ENCODE measurements at regions of chr9 and their contacts with region 1.

Region 1: DNA sequence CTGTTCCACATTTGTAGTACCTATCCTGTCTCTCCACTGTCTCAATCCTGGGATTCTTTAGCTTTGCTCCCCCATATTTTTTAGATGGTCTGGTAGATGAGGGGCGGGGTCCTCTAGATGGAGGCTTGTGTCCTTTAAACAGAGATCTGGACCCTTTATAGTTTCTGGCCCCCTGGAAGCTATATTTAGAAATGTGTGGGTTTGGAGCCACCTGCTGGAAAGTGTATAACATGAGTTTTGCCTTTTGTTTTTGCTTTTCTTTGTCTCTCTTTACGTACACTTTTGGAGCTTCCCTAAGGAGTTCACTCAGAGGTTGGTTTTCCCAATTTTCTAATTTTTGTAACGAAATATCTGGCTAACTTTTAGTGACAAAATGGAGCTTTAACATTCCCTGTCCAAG is 110.7 kb downstream of the CFAP95 start:
- DNase-seq: no peak
- H3K4me3 Mint-ChIP-seq: no peak overlapping the region
- H3K27ac Mint-ChIP-seq: no peak overlapping the region
- H3K4me1 Mint-ChIP-seq: no peaks in the 10 kb centered on the region
- H3K27me3 Mint-ChIP-seq: no peaks in the 10 kb centered on the region
- CTCF ChIP-seq: peak; percentile 42

Region 2: DNA sequence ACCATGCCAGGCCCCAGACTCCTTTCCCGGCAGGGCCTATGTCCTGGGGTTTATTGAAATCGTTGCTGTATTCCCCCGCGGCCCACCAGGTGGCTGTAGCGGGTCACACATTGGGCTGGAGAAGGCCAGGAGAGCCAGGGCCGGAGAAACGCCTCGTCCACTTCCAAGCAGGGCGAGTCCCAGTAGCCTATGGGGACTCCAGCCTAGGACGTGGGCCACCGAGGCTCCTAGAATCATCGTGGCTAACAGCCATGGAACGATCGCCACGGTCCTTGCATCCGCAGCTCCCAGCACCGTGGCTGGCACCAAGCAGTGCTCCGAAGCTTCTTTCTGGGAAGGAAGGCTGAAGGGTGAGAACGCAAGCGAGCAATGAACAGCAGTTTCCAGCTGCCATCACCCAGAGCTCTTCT is 518.6 kb before region 1 on chr9:
- CTCF ChIA-PET with region 1: no interaction called
- intact Hi-C with region 1: loop called (anchors 2 kb)
- DNase-seq: peak; percentile 76
- H3K4me3 Mint-ChIP-seq: no peak overlapping the region
- H3K27ac Mint-ChIP-seq: no peak overlapping the region
- H3K4me1 Mint-ChIP-seq: no peaks in the 10 kb centered on the region
- H3K27me3 Mint-ChIP-seq: peaks cover 15% of the 10 kb centered on the region
- CTCF ChIP-seq: peak; percentile 56

Region 3: GRCh38 chr9:69421908-69422801 is 509.2 kb before region 1 on chr9:
- CTCF ChIA-PET with region 1: no interaction called
- intact Hi-C with region 1: loop called (anchors 2 kb)
- DNase-seq: peak; percentile 61
- H3K4me3 Mint-ChIP-seq: no peak overlapping the region
- H3K27ac Mint-ChIP-seq: peak overlapping the region; percentile 47
- H3K4me1 Mint-ChIP-seq: peaks cover 10% of the 10 kb centered on the region
- H3K27me3 Mint-ChIP-seq: no peaks in the 10 kb centered on the region
- CTCF ChIP-seq: peak; percentile 60

Region 4: GRCh38 chr9:69996967-69997366 is 65.6 kb after region 1 on chr9:
- CTCF ChIA-PET with region 1: no interaction called
- intact Hi-C with region 1: no loop called
- DNase-seq: no peak
- H3K4me3 Mint-ChIP-seq: no peak overlapping the region
- H3K27ac Mint-ChIP-seq: no peak overlapping the region
- H3K4me1 Mint-ChIP-seq: no peaks in the 10 kb centered on the region
- H3K27me3 Mint-ChIP-seq: peaks cover 7% of the 10 kb centered on the region
- CTCF ChIP-seq: no peak

Region 5: GRCh38 chr9:70093944-70094343 is 162.6 kb after region 1 on chr9:
- CTCF ChIA-PET with region 1: no interaction called
- intact Hi-C with region 1: no loop called
- DNase-seq: no peak
- H3K4me3 Mint-ChIP-seq: no peak overlapping the region
- H3K27ac Mint-ChIP-seq: no peak overlapping the region
- H3K4me1 Mint-ChIP-seq: no peaks in the 10 kb centered on the region
- H3K27me3 Mint-ChIP-seq: no peaks in the 10 kb centered on the region
- CTCF ChIP-seq: no peak